Activated naive CD4-positive, alpha-beta T cell treated with anti-CD3 and anti-CD28 coated beads for 36 hours (primary cell): ENCODE measurements at regions of chrX and their contacts with region 1.

Region 1: GRCh38 chrX:104189837-104190236 is 23.6 kb downstream of the FAM199X start:
- DNase-seq: no peak
- H3K4me3 Mint-ChIP-seq: no peak overlapping the region
- H3K27ac Mint-ChIP-seq: no peak overlapping the region
- H3K4me1 Mint-ChIP-seq: no peaks in the 10 kb centered on the region
- H3K27me3 Mint-ChIP-seq: no peaks in the 10 kb centered on the region

Region 2: DNA sequence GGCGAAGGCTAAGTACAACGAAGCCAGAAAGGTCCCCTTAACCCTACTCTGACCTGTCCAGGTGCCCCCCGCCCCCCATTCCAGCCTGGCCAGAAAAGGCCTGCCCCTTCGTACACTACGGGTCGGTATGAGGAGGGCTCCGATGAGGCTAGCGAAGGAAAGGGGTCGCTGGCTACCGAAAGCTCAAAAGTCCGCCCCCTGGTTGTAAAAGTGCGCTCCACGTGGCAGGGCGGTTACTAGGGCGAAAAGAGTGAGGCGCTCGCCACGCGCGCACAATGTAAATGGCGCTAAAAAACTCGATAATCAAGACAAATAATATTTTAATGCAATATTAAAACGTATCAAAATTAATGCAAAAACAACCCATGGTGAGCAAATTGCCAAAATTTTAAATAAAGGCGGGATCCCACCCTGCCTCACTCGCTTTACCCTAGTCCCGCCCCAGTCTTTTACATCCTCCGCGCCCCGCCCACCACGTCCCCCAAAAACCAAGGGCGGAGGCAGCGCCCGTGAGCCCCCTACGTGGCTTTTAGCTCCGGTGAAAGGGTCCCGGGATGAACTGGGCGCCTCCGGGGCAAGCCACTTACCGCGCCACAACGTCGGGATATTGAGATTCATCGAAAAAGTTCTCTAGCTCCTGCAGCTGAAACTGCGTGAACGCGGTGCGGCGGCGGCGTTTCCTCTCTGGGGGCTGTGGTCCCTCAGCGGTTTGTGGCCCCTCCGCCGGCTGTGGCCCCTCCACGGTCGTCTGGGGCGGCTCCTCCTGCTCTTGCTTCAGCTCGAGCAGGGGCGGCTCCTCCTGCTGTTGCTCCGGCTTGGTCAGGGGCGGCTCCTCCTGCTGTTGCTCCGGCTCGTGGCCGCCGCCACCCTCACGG is 64.0 kb after region 1 on chrX:
- CTCF ChIA-PET with region 1: no interaction called
- intact Hi-C with region 1: loop called (anchors 5 kb)
- DNase-seq: peak; percentile 5
- H3K4me3 Mint-ChIP-seq: peak overlapping the region; percentile 64
- H3K27ac Mint-ChIP-seq: no peak overlapping the region
- H3K4me1 Mint-ChIP-seq: peaks cover 6% of the 10 kb centered on the region
- H3K27me3 Mint-ChIP-seq: peaks cover 24% of the 10 kb centered on the region

Region 3: GRCh38 chrX:104721854-104722253 is 532.0 kb after region 1 on chrX:
- CTCF ChIA-PET with region 1: no interaction called
- intact Hi-C with region 1: no loop called
- DNase-seq: no peak
- H3K4me3 Mint-ChIP-seq: no peak overlapping the region
- H3K27ac Mint-ChIP-seq: no peak overlapping the region
- H3K4me1 Mint-ChIP-seq: no peaks in the 10 kb centered on the region
- H3K27me3 Mint-ChIP-seq: no peaks in the 10 kb centered on the region